BJ (cell line): ENCODE measurements at regions of chr7 and their contacts with region 1.

Region 1: GRCh38 chr7:100803398-100804233 is 23.7 kb downstream of the EPHB4 start:
- DNase-seq: peak; percentile 39
- H3K4me3 ChIP-seq: no peak overlapping the region
- H3K27me3 ChIP-seq: no peaks in the 10 kb centered on the region
- CTCF ChIP-seq: no peak

Region 2: GRCh38 chr7:100726996-100727761 is 76.4 kb before region 1 on chr7:
- CTCF ChIA-PET with region 1: interaction called, 23 read pairs
- POLR2A ChIA-PET with region 1: no interaction called
- DNase-seq: peak; percentile 92
- H3K4me3 ChIP-seq: no peak overlapping the region
- H3K27me3 ChIP-seq: peaks cover 27% of the 10 kb centered on the region
- CTCF ChIP-seq: no peak

Region 3: DNA sequence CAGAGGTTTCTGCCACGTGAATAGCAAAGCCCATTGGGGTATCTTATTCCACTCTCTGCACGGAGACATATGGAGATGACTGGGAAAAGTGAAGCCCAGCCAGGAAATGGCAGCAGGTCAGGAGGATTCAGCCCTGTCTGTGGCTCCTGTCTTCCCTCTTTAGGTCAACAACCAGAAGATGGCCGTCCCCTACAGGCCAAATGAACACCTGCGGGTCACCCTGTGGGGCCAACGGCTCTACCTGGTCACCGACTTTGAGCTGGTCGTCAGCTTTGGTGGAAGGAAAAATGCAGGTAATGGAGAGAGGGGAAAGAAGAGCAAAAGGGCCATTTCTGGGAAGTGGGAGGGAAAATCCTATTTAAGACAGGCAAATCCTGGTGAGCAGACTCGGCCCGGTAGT is 14.6 kb before region 1 on chr7:
- CTCF ChIA-PET with region 1: interaction called, 26 read pairs
- POLR2A ChIA-PET with region 1: no interaction called
- DNase-seq: no peak
- H3K4me3 ChIP-seq: no peak overlapping the region
- H3K27me3 ChIP-seq: peaks cover 4% of the 10 kb centered on the region; the same call in 1 of the 2 replicates
- CTCF ChIP-seq: peak; percentile 10; the same call in 1 of the 2 replicates

Region 4: DNA sequence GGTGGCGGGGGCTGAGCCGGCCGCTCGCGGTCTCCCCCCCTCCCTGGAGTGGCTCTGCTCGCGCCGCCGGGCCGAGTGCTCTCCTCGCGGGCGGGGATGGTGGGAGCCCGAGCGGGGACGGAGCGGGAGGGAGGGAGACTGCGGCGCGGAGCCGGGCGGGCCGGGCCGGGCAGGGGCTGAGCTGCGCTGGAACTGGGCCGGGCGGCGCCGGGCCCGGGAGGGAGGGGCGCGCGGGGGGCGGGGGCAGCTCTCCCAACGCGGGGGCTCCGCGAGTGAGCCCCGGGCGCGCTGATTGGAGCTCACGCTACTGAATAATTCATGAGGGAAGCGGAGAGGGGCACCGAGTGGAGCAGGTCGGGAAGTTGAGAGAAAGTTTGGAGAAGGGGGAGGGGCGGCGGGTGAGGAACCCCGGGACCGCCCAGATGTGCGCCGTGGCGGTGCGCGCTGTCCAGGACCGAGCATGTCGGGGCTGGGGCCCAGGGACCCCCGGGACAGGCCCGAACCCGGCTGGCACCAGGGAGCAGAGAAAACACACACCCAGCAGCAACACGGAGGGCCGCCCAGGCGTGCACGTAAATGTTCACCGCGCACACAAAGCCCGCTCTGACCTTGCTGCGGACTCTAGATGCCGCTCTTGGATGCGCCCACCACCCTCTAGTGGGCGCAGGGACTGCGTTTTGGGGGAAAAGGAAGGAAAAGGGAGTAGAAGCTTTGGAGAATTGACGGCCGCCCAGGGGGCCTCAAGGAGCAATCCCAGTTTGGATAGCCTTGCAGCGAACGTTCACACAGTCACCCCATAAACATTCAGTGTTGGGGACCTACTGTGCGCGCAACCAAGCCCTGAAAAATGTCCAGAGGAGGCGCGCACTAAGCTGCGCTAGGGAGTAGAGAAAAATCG is 24.0 kb after region 1 on chr7 and contains the start of gene EPHB4:
- CTCF ChIA-PET with region 1: interaction called, 49 read pairs
- POLR2A ChIA-PET with region 1: no interaction called
- DNase-seq: peak; percentile 32
- H3K4me3 ChIP-seq: peak within 1 kb of the TSS; percentile 74
- H3K27me3 ChIP-seq: no peaks in the 10 kb centered on the region
- CTCF ChIP-seq: peak; percentile 67
- polyA plus RNA-seq, gene EPHB4: 23.8 and 30.5 TPM in 2 replicates